ENCODE measurements at regions of chr6 and their contacts with region 1.

Region 1: GRCh38 chr6:31680840-31681671 is at the start of gene LY6G5C:
- ATAC-seq: peak; percentile 59 to 87 (median 69)
- H3K4me3 ChIP-seq: peak within 1 kb of the TSS in 4 of 5 donors; percentile 1 to 14 (median 8)
- H3K27ac ChIP-seq: no peak within 1 kb of the TSS
- H3K4me1 ChIP-seq: peaks cover 17 to 22% of the 10 kb centered on the region in 2 donors
- total RNA-seq, gene LY6G5C: 1.3 to 7.1 (median 2.8) TPM

Region 2: DNA sequence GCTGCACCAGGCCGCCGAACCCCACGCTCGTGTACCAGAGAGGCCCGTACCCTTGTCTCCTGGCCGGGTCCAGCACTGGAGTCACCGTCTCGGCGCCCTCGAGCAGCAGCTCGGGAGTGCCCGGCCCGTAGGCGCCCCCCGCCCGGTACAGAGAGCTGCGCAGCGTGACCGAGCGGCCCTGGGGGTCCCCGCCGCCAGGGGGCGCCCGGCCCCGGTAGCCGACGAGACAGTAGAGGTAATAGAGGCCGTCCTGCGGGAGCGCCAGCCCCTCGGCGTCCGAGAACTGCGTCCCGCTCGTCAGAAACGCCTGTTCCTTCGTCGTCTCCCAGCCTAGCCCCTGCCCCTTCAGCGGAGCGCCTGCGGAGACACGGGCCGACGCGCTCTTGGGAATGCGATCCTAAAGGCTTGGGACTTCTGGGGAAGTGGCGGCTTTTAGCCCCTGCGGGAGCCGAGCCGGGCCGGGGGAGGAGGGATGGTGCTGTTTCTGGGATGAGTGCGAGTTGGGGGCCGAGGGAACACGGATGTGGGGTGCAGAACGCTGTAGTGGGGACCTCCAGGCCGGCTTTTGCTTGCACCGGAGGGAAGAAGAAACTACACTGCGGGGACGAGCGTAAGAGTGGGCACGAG is 100.1 kb before region 1 on chr6:
- in situ Hi-C with region 1: no loop called
- ATAC-seq: peak; percentile 97 to 99 (median 99)
- H3K4me3 ChIP-seq: peak overlapping the region; percentile 40 to 51 (median 43)
- H3K27ac ChIP-seq: no peak overlapping the region
- H3K4me1 ChIP-seq: peaks cover 0 to 6% of the 10 kb centered on the region in 2 donors

Region 3: DNA sequence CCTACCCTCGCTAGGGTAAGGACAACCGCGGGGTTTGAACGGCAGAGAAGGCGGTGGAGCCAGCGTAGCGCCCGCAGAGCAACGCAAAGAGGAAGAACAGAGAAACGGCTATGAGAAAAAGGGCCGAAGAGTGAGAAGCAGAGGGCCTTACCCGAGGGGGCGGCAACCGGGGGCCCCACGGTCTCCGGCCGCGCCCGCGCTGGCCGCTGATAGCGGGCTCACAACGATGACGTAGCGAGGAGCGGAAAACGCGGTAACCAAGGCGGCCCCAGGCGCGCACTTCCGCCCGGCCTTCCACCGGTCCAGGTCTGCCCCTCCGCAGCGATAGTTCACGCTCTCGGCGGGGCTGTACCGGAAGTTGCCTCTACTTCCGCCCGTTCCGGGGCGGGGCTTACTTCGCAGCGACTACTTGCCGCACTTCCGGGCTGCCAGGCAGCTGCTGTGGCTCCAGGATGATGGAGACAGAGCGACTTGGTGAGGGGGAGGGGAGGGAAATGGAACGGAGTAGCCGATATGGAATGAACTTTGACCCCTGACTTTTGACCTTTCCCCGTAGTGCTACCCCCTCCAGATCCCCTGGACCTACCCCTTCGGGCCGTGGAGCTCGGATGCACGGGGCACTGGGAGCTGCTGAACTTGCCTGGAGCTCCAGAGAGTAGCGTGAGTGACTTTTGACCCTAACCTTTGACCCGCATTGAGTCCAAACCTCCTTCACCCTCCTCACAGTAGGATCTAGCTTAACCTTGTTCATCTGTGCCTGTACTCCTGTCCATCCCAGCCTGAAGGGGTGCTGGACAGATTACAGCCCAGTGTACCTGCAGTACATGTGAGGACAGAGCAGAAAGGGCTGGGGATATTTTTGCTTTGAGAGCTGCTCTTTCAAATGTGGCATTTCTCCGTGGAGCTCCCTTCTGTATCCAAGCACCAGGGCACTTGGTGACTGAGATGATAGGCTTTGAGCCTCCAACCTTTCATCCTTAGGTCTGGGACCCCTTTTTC is 278.0 kb after region 1 on chr6 and contains the starts of genes NELFE and SKIC2:
- in situ Hi-C with region 1: loop called in 1 of 9 experiments (anchors 25 kb)
- ATAC-seq: peak; percentile 96 to 100 (median 98)
- H3K4me3 ChIP-seq: peak within 1 kb of the TSS; percentile 76 to 98 (median 83)
- H3K27ac ChIP-seq: peak within 1 kb of the TSS; percentile 82 to 95
- H3K4me1 ChIP-seq: peaks cover 13 to 16% of the 10 kb centered on the region in 2 donors
- total RNA-seq, gene NELFE: 50.3 to 91.1 (median 72.3) TPM
- total RNA-seq, gene SKIC2: 30.6 to 68.4 (median 52.9) TPM